Activated CD4-positive, alpha-beta T cell treated with anti-CD3 and anti-CD28 coated beads, Interleukin-2, amount 10 ng/mL, durations not matched to agents 24 days and 14 days (primary cell): ENCODE measurements at regions of chr5 and their contacts with region 1.

Region 1: DNA sequence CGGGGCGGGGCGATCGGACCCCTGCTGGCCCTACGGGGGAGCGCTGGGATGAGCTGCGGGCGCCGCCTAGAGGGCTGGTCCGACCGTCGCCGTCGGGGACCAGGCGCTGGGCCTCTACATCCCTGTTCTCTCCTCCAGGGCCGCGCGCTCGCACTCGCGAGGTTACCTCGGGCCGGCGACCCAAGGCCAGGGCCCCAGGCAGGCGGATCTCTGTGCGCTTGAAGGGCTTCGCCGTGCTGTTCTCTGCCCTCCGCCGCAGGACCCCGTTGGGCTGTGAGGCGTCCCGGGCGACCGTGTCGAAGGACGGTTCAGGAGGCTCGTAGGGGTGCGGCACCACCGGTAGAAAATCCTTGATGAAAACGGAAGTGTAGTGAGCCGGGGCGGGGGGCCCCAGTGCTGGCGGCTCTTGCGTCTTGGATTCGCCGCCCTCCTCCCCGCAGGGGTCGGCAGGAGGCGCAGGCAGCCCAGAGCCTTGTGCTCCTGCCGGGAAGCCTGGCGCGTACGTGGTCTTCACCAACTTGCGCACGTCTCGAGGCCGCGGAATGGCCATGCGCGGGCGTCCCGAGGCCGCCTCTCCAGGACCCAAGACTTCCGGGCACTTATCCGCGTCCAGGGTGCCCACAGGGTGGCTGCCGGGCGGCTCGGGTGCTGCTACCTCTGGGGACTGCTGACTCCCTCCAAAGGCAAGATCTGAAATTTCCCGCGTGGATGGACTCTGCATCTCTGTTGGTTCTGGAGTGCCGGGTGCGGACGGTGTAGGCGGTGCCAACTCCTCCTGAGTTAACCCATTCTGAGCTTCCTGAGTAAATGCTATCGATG is 2.0 kb downstream of the PROB1 start:
- DNase-seq: peak; percentile 96
- H3K4me3 Mint-ChIP-seq: peak overlapping the region; percentile 99
- H3K27ac Mint-ChIP-seq: peak overlapping the region; percentile 97
- H3K4me1 Mint-ChIP-seq: peaks cover 53% of the 10 kb centered on the region
- H3K27me3 Mint-ChIP-seq: no peaks in the 10 kb centered on the region

Region 2: GRCh38 chr5:138464008-138464387 is 928.9 kb before region 1 on chr5:
- intact Hi-C with region 1: loop called (anchors 2 kb)
- DNase-seq: peak; percentile 98
- H3K4me3 Mint-ChIP-seq: peak overlapping the region; percentile 90
- H3K27ac Mint-ChIP-seq: peak overlapping the region; percentile 93
- H3K4me1 Mint-ChIP-seq: peaks cover 47% of the 10 kb centered on the region
- H3K27me3 Mint-ChIP-seq: peaks cover 6% of the 10 kb centered on the region

Region 3: GRCh38 chr5:139273572-139274289 is 119.2 kb before region 1 on chr5:
- intact Hi-C with region 1: loop called (anchors 2 kb)
- DNase-seq: peak; percentile 97
- H3K4me3 Mint-ChIP-seq: peak overlapping the region; percentile 97
- H3K27ac Mint-ChIP-seq: peak overlapping the region; percentile 94
- H3K4me1 Mint-ChIP-seq: peaks cover 42% of the 10 kb centered on the region
- H3K27me3 Mint-ChIP-seq: peaks cover 2% of the 10 kb centered on the region

Region 4: DNA sequence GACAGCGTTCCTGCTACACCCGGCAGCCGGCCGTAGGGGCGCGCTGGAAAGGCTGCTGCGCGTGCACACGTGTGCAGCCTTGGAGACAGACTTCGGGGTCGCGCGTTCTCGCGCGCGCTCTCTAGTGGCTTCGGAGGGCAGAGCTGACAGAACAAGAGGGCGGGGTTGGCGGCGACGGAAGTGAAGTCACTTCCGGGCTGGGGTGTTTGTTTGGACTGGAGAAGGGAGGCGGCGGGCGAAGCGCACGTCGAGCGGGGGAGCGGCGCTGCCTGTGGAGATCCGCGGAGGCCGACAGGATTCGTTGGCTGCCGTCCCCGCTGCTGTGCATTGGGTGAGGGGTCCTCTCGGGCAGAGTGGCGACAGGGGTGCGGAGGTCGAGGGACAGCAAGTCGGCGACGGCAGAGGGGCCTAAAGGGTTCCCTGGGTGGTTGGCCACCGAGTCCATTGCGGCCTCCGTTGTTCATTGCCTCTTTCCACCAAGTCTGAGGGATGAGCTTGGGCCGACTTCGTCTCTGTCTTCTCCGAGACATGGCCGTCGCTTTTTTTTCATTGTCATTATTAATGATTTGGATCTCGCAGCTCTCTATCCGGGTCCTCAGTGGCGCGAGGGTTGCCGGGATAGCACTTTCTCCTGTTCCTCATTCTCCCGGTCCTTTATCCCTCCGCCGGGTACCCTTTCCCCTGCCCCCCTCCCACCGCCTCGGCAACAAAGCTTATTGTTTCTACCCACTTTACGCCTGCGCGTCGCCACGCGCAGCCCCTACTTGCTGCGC is 51.1 kb before region 1 on chr5 and contains the start of gene PAIP2:
- intact Hi-C with region 1: loop called (anchors 1 kb)
- DNase-seq: peak; percentile 99
- H3K4me3 Mint-ChIP-seq: peak within 1 kb of the TSS; percentile 97
- H3K27ac Mint-ChIP-seq: peak within 1 kb of the TSS; percentile 100
- H3K4me1 Mint-ChIP-seq: peaks cover 39% of the 10 kb centered on the region
- H3K27me3 Mint-ChIP-seq: no peaks in the 10 kb centered on the region
- total RNA-seq, gene PAIP2: 83.3 and 93.8 TPM in 2 replicates

Region 5: DNA sequence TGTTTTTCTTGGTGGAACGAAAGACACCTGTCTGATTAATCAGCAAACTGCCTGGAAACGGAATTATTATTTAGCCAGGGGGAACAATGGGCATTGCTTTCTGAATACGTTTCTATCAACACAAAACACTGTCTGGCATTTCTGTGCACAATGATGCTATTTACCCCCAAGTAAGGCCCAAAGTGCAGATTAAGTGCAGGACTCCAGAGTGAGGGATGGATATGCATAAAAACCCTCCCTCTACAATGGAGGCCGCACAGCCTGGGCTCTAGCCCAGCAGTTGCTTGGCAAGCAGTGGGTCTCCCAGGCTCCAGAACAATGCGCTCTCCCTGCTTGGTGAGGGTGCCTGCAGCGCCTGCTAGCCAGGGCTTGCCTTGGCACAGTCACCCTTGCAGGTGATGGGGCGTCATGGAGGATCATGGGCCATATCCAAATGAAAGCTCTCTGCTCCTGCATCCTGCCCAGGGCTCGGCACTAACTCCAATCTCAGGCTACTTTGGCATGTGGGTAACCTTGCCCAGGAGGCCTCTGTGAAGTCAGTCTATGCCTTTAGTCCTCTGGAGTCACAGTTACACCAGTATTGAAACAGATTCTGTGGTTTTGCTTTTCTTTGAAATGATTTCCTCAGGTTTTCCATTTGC is 22.5 kb after region 1 on chr5:
- intact Hi-C with region 1: loop called (anchors 1 kb)
- DNase-seq: peak; percentile 81
- H3K4me3 Mint-ChIP-seq: peak overlapping the region; percentile 64
- H3K27ac Mint-ChIP-seq: peak overlapping the region; percentile 95
- H3K4me1 Mint-ChIP-seq: peaks cover 60% of the 10 kb centered on the region
- H3K27me3 Mint-ChIP-seq: no peaks in the 10 kb centered on the region

Region 6: DNA sequence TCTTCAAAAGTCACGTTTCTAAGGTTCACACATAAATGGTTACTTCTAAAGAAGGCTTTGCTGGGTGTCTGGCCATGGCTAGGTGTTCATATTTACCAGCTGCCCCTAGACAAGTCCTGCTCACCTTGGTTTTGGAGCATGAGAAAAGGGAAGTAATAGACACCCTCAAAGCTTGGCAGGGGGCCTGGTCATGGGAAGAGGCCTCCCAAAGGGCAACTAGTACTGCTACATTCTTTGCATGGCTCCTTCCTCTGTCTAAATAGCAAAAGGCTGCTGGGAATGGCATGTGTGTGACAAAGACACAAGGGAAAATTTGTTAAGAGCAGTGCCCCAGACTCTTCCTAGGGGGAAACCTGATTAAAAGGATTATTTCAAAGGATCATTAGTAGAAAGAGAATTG is 556.8 kb after region 1 on chr5:
- intact Hi-C with region 1: no loop called
- DNase-seq: peak; percentile 33
- H3K4me3 Mint-ChIP-seq: no peak overlapping the region
- H3K27ac Mint-ChIP-seq: no peak overlapping the region
- H3K4me1 Mint-ChIP-seq: no peaks in the 10 kb centered on the region
- H3K27me3 Mint-ChIP-seq: peaks cover 28% of the 10 kb centered on the region